Astrocyte of the cerebellum (primary cell): ENCODE measurements at regions of chr14 and their contacts with region 1.

Region 1: GRCh38 chr14:65412032-65412846 is at the start of gene FUT8:
- DNase-seq: peak; percentile 93
- H3K4me3 ChIP-seq: peak within 1 kb of the TSS; percentile 91
- CTCF ChIP-seq: peak; percentile 72

Region 2: GRCh38 chr14:65229751-65230749 is 182.2 kb before region 1 on chr14:
- in situ Hi-C with region 1: loop called (anchors 5 kb)
- DNase-seq: no peak
- H3K4me3 ChIP-seq: peak overlapping the region; percentile 11
- CTCF ChIP-seq: no peak

Region 3: DNA sequence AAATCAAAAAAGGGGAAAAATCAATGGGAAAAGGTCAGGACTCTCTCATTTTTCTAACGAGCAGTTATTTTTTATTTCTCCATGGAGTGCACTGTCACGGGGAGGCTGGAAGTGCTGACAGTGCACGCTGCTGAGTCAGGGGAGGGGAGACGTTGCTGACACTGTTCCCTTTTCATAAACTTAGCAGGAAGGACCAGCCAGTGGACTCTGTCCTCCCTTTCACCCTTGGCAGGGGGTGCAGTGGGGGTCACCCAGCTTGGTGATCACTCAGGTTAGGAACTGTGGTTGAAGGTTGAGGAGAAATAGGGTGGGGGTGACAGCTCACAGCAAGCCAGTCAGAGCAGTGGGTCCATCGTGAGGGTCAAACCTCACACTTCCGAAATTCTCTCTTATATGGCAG is 65.3 kb before region 1 on chr14:
- in situ Hi-C with region 1: no loop called
- DNase-seq: no peak
- H3K4me3 ChIP-seq: no peak overlapping the region
- CTCF ChIP-seq: no peak

Region 4: DNA sequence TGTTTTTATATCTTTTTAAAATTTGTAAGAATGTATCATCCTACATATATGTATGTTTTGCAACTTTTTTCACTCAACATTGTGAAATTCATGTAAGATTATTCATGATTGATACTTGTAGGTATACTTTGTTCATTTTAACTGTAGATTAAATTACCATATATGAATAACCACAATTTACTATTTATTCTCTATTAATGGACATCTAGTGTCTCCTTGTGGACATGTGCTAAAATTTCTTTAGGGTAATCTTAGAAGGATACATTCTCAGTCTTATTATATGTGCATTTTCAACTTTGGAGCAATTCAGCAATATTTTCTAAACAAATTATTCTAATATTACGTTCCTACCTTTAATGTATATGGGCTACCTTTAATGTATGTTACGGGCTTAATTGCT is 192.7 kb after region 1 on chr14:
- in situ Hi-C with region 1: no loop called
- DNase-seq: no peak
- H3K4me3 ChIP-seq: no peak overlapping the region
- CTCF ChIP-seq: no peak